Heart left ventricle (tissue), 16 donors: ENCODE measurements at regions of chrX and their contacts with region 1.

Region 1: GRCh38 chrX:41906515-41907165 is 16.7 kb downstream of the CASK start:
- DNase-seq: no peak
- ATAC-seq: no peak
- H3K4me3 ChIP-seq: no peak overlapping the region
- H3K27ac ChIP-seq: no peak overlapping the region
- H3K4me1 ChIP-seq: peaks cover 0 to 5% (median 0%) of the 10 kb centered on the region in 12 donors
- H3K27me3 ChIP-seq: no peaks in the 10 kb centered on the region
- CTCF ChIP-seq: no peak
- POLR2A ChIP-seq: no peak

Region 2: DNA sequence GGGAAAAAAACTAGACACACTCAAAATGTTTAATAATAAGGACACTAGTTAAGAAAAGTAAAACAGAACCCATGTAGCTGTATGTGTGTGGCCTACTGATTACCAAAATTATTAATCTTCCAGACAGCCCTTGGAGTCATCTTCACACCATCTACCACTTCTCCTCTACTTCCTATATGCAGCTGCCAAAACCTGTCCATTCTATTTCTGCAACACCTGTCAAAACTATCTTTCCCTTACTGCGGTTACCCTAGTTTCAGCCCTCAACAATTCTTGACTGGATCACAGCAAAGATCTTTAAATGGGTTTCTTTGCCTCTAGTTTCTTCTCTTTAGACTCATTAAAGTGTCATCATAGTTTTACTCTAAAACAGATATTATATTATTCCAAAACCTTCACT is 110.1 kb before region 1 on chrX:
- intact Hi-C with region 1: loop called in 1 of 10 experiments (anchors 10 kb)
- DNase-seq: no peak
- ATAC-seq: no peak
- H3K4me3 ChIP-seq: no peak overlapping the region
- H3K27ac ChIP-seq: no peak overlapping the region
- H3K4me1 ChIP-seq: no peaks in the 10 kb centered on the region
- H3K27me3 ChIP-seq: peaks cover 0 to 4% (median 0%) of the 10 kb centered on the region in 9 donors
- CTCF ChIP-seq: no peak
- POLR2A ChIP-seq: no peak

Region 3: GRCh38 chrX:42020225-42020624 is 113.6 kb after region 1 on chrX:
- intact Hi-C with region 1: no loop called
- DNase-seq: no peak
- ATAC-seq: no peak
- H3K4me3 ChIP-seq: no peak overlapping the region
- H3K27ac ChIP-seq: no peak overlapping the region
- H3K4me1 ChIP-seq: no peaks in the 10 kb centered on the region
- H3K27me3 ChIP-seq: no peaks in the 10 kb centered on the region
- CTCF ChIP-seq: no peak
- POLR2A ChIP-seq: no peak